Caco-2 (cell line): ENCODE measurements at regions of chr14 and their contacts with region 1.

Region 1: DNA sequence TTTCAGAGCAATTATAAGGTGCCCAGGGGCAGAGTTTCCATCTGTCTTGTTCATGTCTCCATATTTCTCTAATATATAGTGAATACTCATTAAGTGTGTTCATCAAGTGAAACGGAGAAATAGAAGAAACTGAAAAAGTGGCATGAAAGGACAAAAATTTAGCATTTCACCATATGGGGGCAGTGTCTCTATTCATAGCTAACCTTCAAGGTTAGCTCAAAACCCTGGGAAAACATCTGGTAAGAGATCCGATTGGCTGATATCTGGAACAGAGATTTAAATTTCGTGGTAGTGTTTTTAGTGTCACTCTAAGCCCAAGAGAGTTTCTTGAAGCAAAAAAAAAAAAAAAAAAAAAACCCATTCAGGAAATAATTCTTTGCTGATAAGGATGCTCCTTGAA is 367.5 kb downstream of the DAD1 start:
- DNase-seq: peak in 1 of 2 experiments; percentile 29
- H3K4me3 ChIP-seq: no peak overlapping the region
- H3K4me3 Mint-ChIP-seq: no peak overlapping the region
- H3K27ac Mint-ChIP-seq: no peak overlapping the region
- H3K4me1 ChIP-seq: peaks cover 9% of the 10 kb centered on the region
- H3K4me1 Mint-ChIP-seq: peaks cover 6% of the 10 kb centered on the region
- H3K27me3 ChIP-seq: no peaks in the 10 kb centered on the region
- H3K27me3 Mint-ChIP-seq: no peaks in the 10 kb centered on the region
- CTCF ChIP-seq: peak; percentile 15 to 43

Region 2: GRCh38 chr14:21686468-21686867 is 535.0 kb before region 1 on chr14:
- CTCF ChIA-PET with region 1: interaction called, 10 read pairs
- POLR2A ChIA-PET with region 1: no interaction called
- intact Hi-C with region 1: no loop called
- DNase-seq: no peak
- H3K4me3 ChIP-seq: no peak overlapping the region
- H3K4me3 Mint-ChIP-seq: peak overlapping the region; percentile 18
- H3K27ac Mint-ChIP-seq: peak overlapping the region; percentile 23
- H3K4me1 ChIP-seq: peaks cover 22% of the 10 kb centered on the region
- H3K4me1 Mint-ChIP-seq: peaks cover 24% of the 10 kb centered on the region
- H3K27me3 ChIP-seq: no peaks in the 10 kb centered on the region
- H3K27me3 Mint-ChIP-seq: no peaks in the 10 kb centered on the region
- CTCF ChIP-seq: no peak

Region 3: GRCh38 chr14:22200977-22201605 is 20.4 kb before region 1 on chr14:
- CTCF ChIA-PET with region 1: interaction called, 19 read pairs
- POLR2A ChIA-PET with region 1: no interaction called
- intact Hi-C with region 1: loop called (anchors 2 kb)
- DNase-seq: peak in 1 of 2 experiments; percentile 57
- H3K4me3 ChIP-seq: no peak overlapping the region
- H3K4me3 Mint-ChIP-seq: no peak overlapping the region
- H3K27ac Mint-ChIP-seq: no peak overlapping the region
- H3K4me1 ChIP-seq: no peaks in the 10 kb centered on the region; the same call in 1 of the 2 replicates
- H3K4me1 Mint-ChIP-seq: no peaks in the 10 kb centered on the region
- H3K27me3 ChIP-seq: no peaks in the 10 kb centered on the region
- H3K27me3 Mint-ChIP-seq: no peaks in the 10 kb centered on the region
- CTCF ChIP-seq: peak; percentile 55 to 84

Region 4: GRCh38 chr14:22296722-22297121 is 75.2 kb after region 1 on chr14:
- CTCF ChIA-PET with region 1: no interaction called
- POLR2A ChIA-PET with region 1: no interaction called
- intact Hi-C with region 1: no loop called
- DNase-seq: peak in 1 of 2 experiments; percentile 68
- H3K4me3 ChIP-seq: no peak overlapping the region
- H3K4me3 Mint-ChIP-seq: no peak overlapping the region
- H3K27ac Mint-ChIP-seq: peak overlapping the region; percentile 67
- H3K4me1 ChIP-seq: peaks cover 48% of the 10 kb centered on the region
- H3K4me1 Mint-ChIP-seq: peaks cover 34% of the 10 kb centered on the region
- H3K27me3 ChIP-seq: no peaks in the 10 kb centered on the region
- H3K27me3 Mint-ChIP-seq: no peaks in the 10 kb centered on the region
- CTCF ChIP-seq: no peak

Region 5: GRCh38 chr14:22314181-22314820 is 92.8 kb after region 1 on chr14:
- CTCF ChIA-PET with region 1: interaction called, 11 read pairs
- POLR2A ChIA-PET with region 1: no interaction called
- intact Hi-C with region 1: loop called (anchors 2 kb)
- DNase-seq: peak in 1 of 2 experiments; percentile 66
- H3K4me3 ChIP-seq: no peak overlapping the region
- H3K4me3 Mint-ChIP-seq: no peak overlapping the region
- H3K27ac Mint-ChIP-seq: peak overlapping the region; percentile 37
- H3K4me1 ChIP-seq: peaks cover 6% of the 10 kb centered on the region; the same call in 1 of the 2 replicates
- H3K4me1 Mint-ChIP-seq: peaks cover 19% of the 10 kb centered on the region
- H3K27me3 ChIP-seq: no peaks in the 10 kb centered on the region
- H3K27me3 Mint-ChIP-seq: no peaks in the 10 kb centered on the region
- CTCF ChIP-seq: peak; percentile 64 to 65

Region 6: DNA sequence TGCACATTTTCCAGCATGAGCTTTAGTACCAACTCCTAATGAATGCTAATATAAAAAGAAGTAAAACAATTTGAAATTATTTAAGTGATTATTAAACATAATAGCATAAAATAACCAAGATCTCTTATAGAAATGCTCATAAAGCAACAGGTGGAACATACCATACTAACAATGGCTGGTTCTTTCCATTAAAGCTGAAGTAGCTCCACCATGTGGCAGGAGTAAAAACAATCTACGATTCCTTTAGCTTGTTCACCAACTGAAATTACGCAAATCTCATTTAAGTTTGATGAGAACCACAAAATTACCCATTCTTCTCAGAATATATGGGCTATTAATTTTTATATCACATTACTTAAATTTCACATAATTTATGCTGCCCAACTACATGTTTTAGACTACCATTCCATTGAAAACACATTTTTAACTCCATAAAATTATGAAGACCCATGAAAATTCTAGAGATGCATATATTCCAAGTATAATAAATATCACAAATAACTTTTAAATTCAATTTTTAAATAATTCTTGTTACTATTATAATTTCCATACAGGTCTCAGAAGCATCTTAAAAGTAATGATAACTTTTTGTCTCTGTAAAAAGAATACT is 153.9 kb after region 1 on chr14:
- CTCF ChIA-PET with region 1: interaction called, 14 read pairs
- POLR2A ChIA-PET with region 1: interaction called, 5 read pairs
- intact Hi-C with region 1: loop called (anchors 1 kb)
- DNase-seq: peak in 1 of 2 experiments; percentile 60
- H3K4me3 ChIP-seq: no peak overlapping the region
- H3K4me3 Mint-ChIP-seq: no peak overlapping the region
- H3K27ac Mint-ChIP-seq: no peak overlapping the region
- H3K4me1 ChIP-seq: peaks cover 42% of the 10 kb centered on the region
- H3K4me1 Mint-ChIP-seq: peaks cover 23% of the 10 kb centered on the region
- H3K27me3 ChIP-seq: no peaks in the 10 kb centered on the region
- H3K27me3 Mint-ChIP-seq: no peaks in the 10 kb centered on the region
- CTCF ChIP-seq: peak; percentile 53 to 65

Region 7: GRCh38 chr14:22472935-22473854 is 251.7 kb after region 1 on chr14:
- CTCF ChIA-PET with region 1: interaction called, 11 read pairs
- POLR2A ChIA-PET with region 1: no interaction called
- intact Hi-C with region 1: loop called (anchors 2 kb)
- DNase-seq: peak; percentile 39 to 55
- H3K4me3 ChIP-seq: no peak overlapping the region
- H3K4me3 Mint-ChIP-seq: no peak overlapping the region
- H3K27ac Mint-ChIP-seq: no peak overlapping the region
- H3K4me1 ChIP-seq: peaks cover 4% of the 10 kb centered on the region; the same call in 1 of the 2 replicates
- H3K4me1 Mint-ChIP-seq: peaks cover 13% of the 10 kb centered on the region
- H3K27me3 ChIP-seq: no peaks in the 10 kb centered on the region
- H3K27me3 Mint-ChIP-seq: no peaks in the 10 kb centered on the region
- CTCF ChIP-seq: peak; percentile 60 to 66